ENCODE measurements at regions of chr9 and their contacts with region 1.

Region 1: GRCh38 chr9:134455934-134456739 is 129.9 kb downstream of the RXRA start:
- DNase-seq: peak; percentile 93
- ATAC-seq: peak; percentile 83

Region 2: GRCh38 chr9:134316449-134317160 is 139.5 kb before region 1 on chr9:
- intact Hi-C with region 1: no loop called
- DNase-seq: peak; percentile 69
- ATAC-seq: peak; percentile 59

Region 3: GRCh38 chr9:134403682-134404301 is 52.3 kb before region 1 on chr9:
- intact Hi-C with region 1: no loop called
- DNase-seq: peak; percentile 94
- ATAC-seq: peak; percentile 6

Region 4: DNA sequence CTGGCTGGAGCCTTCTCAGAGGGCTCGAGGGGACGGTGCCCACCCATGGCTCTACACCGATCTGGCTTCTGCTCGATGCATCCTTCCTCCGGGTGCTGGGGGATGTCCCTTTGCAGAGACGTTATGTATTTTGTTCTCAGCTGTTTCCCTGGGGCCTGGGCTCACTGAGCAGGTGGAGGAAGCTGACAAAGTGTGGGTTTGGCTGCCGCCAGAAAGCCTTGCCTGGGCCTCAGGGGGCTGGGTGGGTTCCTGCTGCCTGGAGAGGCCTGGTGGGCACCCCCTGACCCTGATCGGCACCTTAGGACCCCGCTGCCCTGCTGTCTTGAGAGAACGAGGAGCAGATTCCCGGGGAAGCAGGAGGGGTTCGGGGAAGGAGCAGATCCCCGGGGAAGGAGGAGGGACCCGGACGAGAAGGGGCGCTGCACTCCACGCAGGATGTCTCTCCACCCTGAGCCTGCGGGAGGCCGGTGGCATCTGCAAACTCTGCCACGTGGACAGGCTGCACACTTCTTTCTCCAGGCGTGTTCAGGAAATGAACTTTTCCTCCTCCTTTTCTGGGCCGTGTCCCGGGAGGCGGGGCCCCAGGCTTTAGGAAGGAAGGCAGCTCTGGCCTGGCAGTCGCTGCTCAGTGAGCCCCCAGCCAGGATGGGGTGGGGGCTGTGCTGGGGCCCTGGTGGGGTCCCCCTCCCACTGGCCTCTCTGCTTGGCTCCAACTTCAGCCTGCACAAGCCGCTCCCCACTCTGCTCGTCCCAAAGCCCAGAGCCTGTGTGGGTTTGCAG is 19.1 kb after region 1 on chr9:
- intact Hi-C with region 1: loop called (anchors 2 kb)
- DNase-seq: peak; percentile 87
- ATAC-seq: peak; percentile 59

Measured in Right ventricle myocardium inferior (tissue), 1 donor.